ENCODE measurements at regions of chr1 and their contacts with region 1.

Region 1: DNA sequence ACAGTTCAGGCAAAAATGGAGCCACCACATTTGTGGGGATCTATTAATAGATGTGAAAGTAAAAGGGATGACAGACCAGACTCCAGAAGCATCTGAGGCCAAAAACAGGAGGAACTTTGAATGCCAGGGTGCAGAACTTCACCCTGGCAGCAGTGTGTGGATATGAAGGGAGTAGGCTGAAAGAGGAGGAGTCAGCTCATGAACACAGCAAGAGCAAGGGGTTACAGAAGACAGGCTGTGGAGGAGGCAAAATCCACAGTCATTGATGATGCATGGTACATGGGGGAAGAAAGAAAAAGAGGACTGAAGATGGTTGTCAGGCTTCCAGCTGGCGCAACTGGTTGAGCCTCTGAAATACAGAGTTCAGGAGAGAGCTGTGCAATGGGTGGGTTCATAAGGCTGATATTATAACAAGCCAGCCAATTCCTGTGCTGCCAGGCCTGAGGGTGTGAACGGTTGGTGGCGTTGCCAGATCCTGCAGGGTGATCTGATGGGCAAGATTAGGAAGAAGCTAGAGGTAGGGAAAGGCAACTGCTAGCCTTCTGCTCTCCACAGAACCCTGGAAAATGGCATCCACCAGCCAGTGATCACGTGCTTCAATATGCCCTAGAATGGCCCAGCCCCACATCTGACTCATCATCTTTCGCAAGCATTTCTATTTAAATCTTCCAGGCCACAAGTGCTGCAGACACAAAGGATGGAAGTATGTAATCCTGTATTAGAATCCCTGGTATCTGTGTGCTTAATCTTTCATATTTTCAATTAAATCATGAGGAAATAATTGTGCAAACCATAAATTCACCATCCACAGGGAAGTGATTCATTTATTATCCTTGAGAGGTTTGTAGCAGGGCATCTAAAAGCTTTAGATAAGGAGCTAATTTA is 81.9 kb downstream of the SLC25A24 start:
- DNase-seq: no peak
- H3K4me3 ChIP-seq: no peak overlapping the region
- H3K27ac ChIP-seq: peak overlapping the region in 2 of 8 donors; percentile 20 to 61
- H3K4me1 ChIP-seq: peaks cover 0 to 34% (median 18%) of the 10 kb centered on the region in 6 donors
- H3K27me3 ChIP-seq: no peaks in the 10 kb centered on the region
- CTCF ChIP-seq: no peak
- POLR2A ChIP-seq: no peak

Region 2: DNA sequence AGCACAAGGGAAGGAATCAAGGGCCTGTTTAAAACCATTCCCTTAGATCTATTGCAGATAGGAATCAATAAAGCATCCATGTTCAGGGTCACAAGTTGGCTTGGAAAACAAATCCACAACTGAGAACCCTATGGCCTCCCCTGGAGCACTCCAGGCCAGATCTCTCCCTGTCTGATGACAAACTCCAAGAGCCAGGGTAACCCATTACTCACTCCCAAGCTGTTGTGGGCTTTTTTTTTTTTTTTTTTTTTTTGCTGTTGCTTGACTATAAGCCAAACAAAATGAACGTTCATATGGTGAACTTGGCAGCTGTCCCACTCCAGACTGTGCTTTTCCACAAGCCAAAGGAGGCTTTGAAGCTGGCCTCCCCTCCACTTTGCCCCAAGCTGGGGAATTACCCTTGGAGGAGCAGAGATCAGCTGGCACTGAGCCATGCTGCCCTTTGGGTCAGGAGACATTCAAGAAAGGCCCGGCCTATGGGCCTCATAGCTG is 117.6 kb before region 1 on chr1:
- intact Hi-C with region 1: no loop called
- DNase-seq: no peak
- H3K4me3 ChIP-seq: no peak overlapping the region
- H3K27ac ChIP-seq: peak overlapping the region in 1 of 8 donors; percentile 13
- H3K4me1 ChIP-seq: peaks cover 0 to 7% (median 0%) of the 10 kb centered on the region in 6 donors
- H3K27me3 ChIP-seq: no peaks in the 10 kb centered on the region
- CTCF ChIP-seq: no peak
- POLR2A ChIP-seq: no peak

Region 3: DNA sequence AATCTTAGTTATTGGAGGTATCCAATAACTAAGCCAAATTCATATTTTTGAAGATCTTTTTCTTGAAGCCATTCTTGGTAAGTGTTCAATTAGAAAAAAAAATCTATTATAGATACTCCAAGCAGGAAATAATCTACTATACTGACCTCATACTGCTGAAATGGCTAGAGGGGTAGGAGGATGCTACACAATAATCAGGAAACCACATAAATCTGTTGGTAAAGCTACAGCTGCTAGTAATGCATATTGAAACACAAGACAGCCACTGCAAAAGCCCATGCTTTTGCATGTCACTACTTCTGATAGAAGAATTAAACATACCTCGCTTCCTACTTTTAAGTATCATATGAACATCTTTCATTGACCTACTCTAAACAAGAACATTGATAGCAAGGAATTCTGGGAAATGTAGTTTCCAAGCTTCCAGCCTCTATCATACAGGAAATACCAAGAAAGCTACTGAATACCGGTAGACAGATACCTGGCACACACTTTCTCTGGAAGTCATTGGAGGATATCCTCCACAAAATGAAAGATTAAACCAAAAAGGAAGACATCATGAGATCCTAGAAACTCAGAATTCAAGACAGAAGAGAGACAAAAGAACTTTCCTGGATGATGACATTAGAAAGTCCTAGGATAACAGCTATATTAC is 50.2 kb before region 1 on chr1:
- intact Hi-C with region 1: loop called (anchors 10 kb)
- DNase-seq: no peak
- H3K4me3 ChIP-seq: no peak overlapping the region
- H3K27ac ChIP-seq: no peak overlapping the region
- H3K4me1 ChIP-seq: peaks cover 0 to 29% (median 5%) of the 10 kb centered on the region in 6 donors
- H3K27me3 ChIP-seq: no peaks in the 10 kb centered on the region
- CTCF ChIP-seq: no peak
- POLR2A ChIP-seq: no peak

Region 4: GRCh38 chr1:108208724-108209429 is 90.6 kb after region 1 on chr1:
- intact Hi-C with region 1: no loop called
- DNase-seq: no peak
- H3K4me3 ChIP-seq: no peak overlapping the region
- H3K27ac ChIP-seq: no peak overlapping the region
- H3K4me1 ChIP-seq: no peaks in the 10 kb centered on the region
- H3K27me3 ChIP-seq: peaks cover 0 to 13% (median 0%) of the 10 kb centered on the region in 7 donors
- CTCF ChIP-seq: no peak
- POLR2A ChIP-seq: no peak

Measured in spleen (tissue), 13 donors.